Activated B cell treated with CpG ODN at 0.5 μM for 24 hours (primary cell): ENCODE measurements at regions of chrX and their contacts with region 1.

Region 1: GRCh38 chrX:70096052-70096451 is 33.8 kb downstream of the OTUD6A start:
- DNase-seq: no peak
- ATAC-seq: no peak
- H3K4me3 Mint-ChIP-seq: no peak overlapping the region
- H3K27ac Mint-ChIP-seq: no peak overlapping the region
- H3K4me1 Mint-ChIP-seq: no peaks in the 10 kb centered on the region
- H3K27me3 Mint-ChIP-seq: peaks cover 10% of the 10 kb centered on the region
- CTCF ChIP-seq: no peak

Region 2: DNA sequence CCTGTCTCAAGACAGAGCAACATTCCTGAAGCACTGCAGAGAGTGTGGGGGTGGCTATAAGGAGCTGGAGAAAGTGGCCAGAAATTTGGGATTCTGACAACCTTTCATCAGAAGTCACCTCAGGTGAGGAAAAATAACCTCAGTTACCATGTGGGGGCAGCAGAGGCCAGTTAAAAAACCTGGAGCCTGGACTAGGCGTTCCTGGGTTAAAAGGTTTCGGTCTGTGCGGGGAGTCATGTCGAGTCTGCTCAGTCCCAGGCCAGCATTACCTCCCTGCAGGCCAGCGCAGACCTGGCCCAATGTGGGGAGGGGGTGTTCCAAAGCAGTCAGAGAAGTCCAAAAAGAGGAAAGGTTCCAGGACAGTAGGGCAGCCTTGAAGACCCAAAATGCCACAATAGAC is 602.9 kb before region 1 on chrX:
- CTCF ChIA-PET with region 1: no interaction called
- POLR2A ChIA-PET with region 1: no interaction called
- intact Hi-C with region 1: loop called (anchors 5 kb)
- DNase-seq: no peak
- ATAC-seq: no peak
- H3K4me3 Mint-ChIP-seq: no peak overlapping the region
- H3K27ac Mint-ChIP-seq: no peak overlapping the region
- H3K4me1 Mint-ChIP-seq: no peaks in the 10 kb centered on the region
- H3K27me3 Mint-ChIP-seq: no peaks in the 10 kb centered on the region
- CTCF ChIP-seq: no peak